PC-3 (cell line): ENCODE measurements at regions of chr3 and their contacts with region 1.

Region 1: GRCh38 chr3:149174901-149175300 is 45.5 kb downstream of the HPS3 start:
- DNase-seq: peak; percentile 22
- ATAC-seq: peak; percentile 49
- H3K4me3 ChIP-seq: no peak overlapping the region
- H3K27ac ChIP-seq: peak overlapping the region; percentile 39
- H3K4me1 ChIP-seq: peaks cover 30% of the 10 kb centered on the region
- H3K27me3 ChIP-seq: no peaks in the 10 kb centered on the region
- CTCF ChIP-seq: no peak

Region 2: DNA sequence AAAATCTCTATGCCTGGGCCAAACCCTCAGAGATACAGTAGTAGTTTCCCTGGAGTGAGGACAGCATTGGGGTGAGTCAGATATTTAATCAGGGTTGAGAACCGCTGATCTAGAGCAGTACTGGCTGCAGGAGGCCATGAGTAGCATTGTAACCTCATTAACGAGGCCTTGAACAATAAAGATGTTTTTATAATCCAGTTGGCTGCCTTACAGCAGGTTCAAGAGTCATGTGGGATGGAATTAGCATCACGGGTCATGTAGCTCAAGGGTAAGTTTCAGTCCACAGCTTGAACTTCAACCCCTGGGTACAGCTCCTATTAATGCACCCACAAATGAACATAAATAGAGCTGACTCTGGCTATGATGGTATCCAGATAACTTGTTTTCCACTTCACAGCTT is 40.3 kb before region 1 on chr3:
- CTCF ChIA-PET with region 1: no interaction called
- POLR2A ChIA-PET with region 1: interaction called, 3 read pairs
- intact Hi-C with region 1: loop called (anchors 2 kb)
- DNase-seq: peak; percentile 74
- ATAC-seq: peak; percentile 88
- H3K4me3 ChIP-seq: no peak overlapping the region; the same call in 1 of the 2 replicates
- H3K27ac ChIP-seq: peak overlapping the region; percentile 43
- H3K4me1 ChIP-seq: peaks cover 33% of the 10 kb centered on the region
- H3K27me3 ChIP-seq: no peaks in the 10 kb centered on the region
- CTCF ChIP-seq: no peak

Region 3: DNA sequence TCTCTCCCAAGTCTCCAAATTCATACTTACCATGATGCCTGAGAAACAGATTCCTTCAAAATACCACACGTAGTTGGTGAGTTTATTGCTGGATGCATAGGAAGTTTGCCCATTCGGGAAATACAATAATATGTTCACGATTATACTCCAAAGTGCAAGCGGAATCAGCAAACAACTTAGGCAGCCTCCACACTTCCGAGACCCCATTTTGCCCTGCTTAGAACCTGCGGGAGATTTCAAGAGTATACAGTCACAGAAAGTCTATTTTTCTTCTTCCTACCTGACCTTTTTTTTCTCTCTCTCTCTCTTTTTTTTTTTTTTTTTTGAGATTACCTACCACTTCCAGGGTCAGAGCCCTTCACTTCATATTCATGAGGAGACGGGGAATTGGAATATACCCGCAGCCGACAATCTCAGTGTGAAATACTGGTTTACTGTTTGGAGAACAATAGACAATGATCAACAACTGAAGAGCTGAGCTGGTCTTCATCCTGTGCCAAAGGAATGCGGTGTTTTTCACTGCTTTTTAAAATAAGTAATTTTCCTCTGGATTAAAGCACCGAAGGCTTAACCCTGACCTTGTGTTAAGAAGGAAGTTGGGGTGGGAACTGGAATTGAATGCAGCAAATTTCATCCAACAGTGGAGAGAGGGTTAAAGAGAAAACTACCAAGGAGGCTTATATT is 158.4 kb after region 1 on chr3 and contains the start of gene TM4SF18:
- CTCF ChIA-PET with region 1: no interaction called
- POLR2A ChIA-PET with region 1: no interaction called
- intact Hi-C with region 1: no loop called
- DNase-seq: no peak
- ATAC-seq: no peak
- H3K4me3 ChIP-seq: no peak within 1 kb of the TSS
- H3K27ac ChIP-seq: peak within 1 kb of the TSS; percentile 23
- H3K4me1 ChIP-seq: peaks cover 39% of the 10 kb centered on the region
- H3K27me3 ChIP-seq: no peaks in the 10 kb centered on the region
- CTCF ChIP-seq: no peak
- total RNA-seq, gene TM4SF18: 0.06 and 0.40 TPM in 2 replicates